K562 (cell line): ENCODE measurements at regions of chr12 and their contacts with region 1.

Region 1: GRCh38 chr12:116559162-116559935 is at the start of gene MAP1LC3B2:
- DNase-seq: peak; percentile 87 to 98 (median 90)
- ATAC-seq: peak; percentile 91
- H3K4me3 ChIP-seq: peak within 1 kb of the TSS; percentile 27
- H3K27ac ChIP-seq: peak within 1 kb of the TSS; percentile 99
- H3K4me1 ChIP-seq: peaks cover 38 to 47% of the 10 kb centered on the region in 2 experiments
- H3K27me3 ChIP-seq: no peaks in the 10 kb centered on the region
- CTCF ChIP-seq: no peak
- EP300 ChIP-seq: peak; percentile 95
- POLR2A ChIP-seq: peak; percentile 78
- RAD21 ChIP-seq: peak in 1 of 2 experiments; percentile 29; a peak in 2 of 4 replicates
- polyA plus RNA-seq, gene MAP1LC3B2: 0.55 to 0.63 TPM

Region 2: DNA sequence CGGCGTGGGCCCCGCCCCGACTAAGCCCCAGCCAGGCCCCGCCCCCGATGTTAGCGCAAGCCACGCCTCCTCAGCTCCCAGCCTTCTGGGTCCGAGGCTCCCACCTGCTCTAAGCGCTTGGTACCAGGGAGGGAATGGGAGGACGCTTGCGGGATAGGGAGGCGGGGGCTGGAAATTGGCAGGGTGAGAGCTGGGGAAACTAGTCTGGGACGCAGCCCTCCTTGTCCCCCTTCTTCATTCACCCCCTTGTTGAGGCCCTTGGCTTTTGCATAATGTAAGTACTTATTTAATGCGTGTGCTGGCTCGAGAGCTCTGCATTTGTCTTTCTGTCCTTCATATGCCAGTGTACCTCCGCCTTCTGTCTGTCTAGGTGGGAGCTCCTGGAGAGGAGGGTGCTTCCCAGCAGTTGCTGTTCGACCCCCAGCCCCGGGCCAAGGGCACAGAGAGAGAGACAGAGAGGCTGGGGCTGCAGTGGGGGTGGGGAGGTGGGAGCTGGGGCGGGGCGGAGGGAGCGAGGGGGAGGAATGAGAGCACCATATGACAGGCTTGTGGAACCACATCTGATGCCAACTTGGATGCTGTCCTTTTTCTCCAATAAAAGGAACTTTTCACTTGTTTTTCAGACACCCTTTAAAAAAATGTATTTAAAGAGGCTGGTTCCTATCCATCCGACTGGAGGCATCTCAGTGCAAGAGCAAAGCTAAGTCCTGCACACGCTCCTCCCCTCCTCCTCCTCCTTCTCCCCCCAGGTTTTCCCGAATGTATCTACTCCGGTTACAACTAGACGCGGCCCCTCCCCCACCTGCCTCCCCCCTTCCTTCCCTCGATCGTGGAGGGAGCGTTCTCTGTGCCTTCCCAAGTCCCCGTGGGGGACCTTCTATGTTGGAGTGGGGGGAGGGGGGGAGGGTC is 25.8 kb before region 1 on chr12:
- CTCF ChIA-PET with region 1: no interaction called
- POLR2A ChIA-PET with region 1: interaction called, 15 read pairs
- in situ Hi-C with region 1: no loop called
- intact Hi-C with region 1: loop called (anchors 1 kb)
- DNase-seq: peak; percentile 89 to 99 (median 98)
- ATAC-seq: peak; percentile 97
- H3K4me3 ChIP-seq: peak overlapping the region; percentile 53
- H3K27ac ChIP-seq: peak overlapping the region; percentile 73
- H3K4me1 ChIP-seq: peaks cover 21 to 22% of the 10 kb centered on the region in 2 experiments
- H3K27me3 ChIP-seq: no peaks in the 10 kb centered on the region
- CTCF ChIP-seq: no peak
- EP300 ChIP-seq: peak; percentile 7; the same call in 1 of the 2 replicates
- POLR2A ChIP-seq: peak; percentile 53
- RAD21 ChIP-seq: peak in 1 of 2 experiments; percentile 12; a peak in 1 of 4 replicates

Region 3: DNA sequence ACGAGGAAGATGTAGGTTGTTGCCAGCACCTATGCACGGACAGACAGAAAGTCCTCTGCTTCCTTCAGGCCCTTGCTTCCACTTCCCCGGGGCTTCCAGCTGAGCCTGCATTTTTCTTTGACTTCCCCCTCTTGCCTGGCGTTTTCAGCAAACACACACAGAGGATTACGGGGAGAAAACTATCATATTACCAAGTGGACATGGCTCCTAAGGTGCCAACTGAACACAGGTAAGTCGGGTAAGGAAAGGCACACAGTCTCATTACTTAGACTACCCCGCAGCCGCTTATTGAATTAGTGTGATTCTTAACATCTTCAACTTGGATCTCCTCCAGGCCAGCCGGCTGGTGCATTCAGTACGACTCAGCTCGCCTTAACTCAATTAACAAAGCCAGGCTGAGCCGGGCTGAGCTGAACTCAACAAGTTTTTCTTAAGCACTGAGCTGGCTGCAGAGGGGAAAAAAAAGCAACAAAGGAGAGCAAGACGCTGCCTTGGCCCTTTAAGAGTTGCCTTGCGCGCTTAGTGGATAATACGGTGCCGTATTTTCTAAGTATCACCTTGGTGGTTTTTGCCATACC is 19.4 kb before region 1 on chr12:
- CTCF ChIA-PET with region 1: no interaction called
- POLR2A ChIA-PET with region 1: interaction called, 40 read pairs
- in situ Hi-C with region 1: no loop called
- intact Hi-C with region 1: no loop called
- DNase-seq: no peak
- ATAC-seq: peak; percentile 48
- H3K4me3 ChIP-seq: no peak overlapping the region
- H3K27ac ChIP-seq: no peak overlapping the region
- H3K4me1 ChIP-seq: peaks cover 8 to 24% of the 10 kb centered on the region in 2 experiments
- H3K27me3 ChIP-seq: no peaks in the 10 kb centered on the region
- CTCF ChIP-seq: no peak
- EP300 ChIP-seq: no peak
- POLR2A ChIP-seq: no peak
- RAD21 ChIP-seq: no peak

Region 4: DNA sequence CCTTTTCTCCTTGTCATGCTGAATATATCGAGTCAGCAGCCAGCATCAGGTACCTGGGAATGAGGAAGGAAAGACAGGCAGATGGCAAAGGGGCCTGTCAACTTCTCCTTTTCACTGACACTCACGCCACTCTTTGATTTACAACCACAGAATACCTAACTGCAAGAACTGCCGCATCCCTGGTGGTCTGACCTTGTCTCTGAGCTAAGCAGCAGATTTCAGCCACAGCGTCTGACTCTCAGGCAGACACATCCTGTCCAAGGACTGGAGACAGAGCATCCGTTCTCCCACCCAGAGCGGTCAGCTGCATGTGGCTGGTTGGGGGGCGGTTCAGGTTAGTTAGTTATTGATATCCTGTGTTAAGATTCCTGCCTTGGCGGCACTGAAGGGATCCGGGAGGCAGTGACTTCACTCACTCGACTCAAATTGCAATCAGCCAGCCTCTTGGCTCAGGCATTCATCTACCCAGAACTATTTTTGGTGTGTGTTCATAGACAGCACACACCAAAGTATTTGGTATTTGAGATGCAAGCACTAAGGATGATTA is 11.3 kb before region 1 on chr12:
- CTCF ChIA-PET with region 1: no interaction called
- POLR2A ChIA-PET with region 1: interaction called, 40 read pairs
- in situ Hi-C with region 1: no loop called
- intact Hi-C with region 1: no loop called
- DNase-seq: peak in 2 of 4 experiments; percentile 30 to 47
- ATAC-seq: peak; percentile 28
- H3K4me3 ChIP-seq: no peak overlapping the region
- H3K27ac ChIP-seq: no peak overlapping the region; the same call in 2 of the 3 replicates
- H3K4me1 ChIP-seq: peaks cover 25 to 41% of the 10 kb centered on the region in 2 experiments
- H3K27me3 ChIP-seq: no peaks in the 10 kb centered on the region
- CTCF ChIP-seq: no peak
- EP300 ChIP-seq: peak; percentile 42; the same call in 1 of the 2 replicates
- POLR2A ChIP-seq: no peak
- RAD21 ChIP-seq: no peak

Region 5: DNA sequence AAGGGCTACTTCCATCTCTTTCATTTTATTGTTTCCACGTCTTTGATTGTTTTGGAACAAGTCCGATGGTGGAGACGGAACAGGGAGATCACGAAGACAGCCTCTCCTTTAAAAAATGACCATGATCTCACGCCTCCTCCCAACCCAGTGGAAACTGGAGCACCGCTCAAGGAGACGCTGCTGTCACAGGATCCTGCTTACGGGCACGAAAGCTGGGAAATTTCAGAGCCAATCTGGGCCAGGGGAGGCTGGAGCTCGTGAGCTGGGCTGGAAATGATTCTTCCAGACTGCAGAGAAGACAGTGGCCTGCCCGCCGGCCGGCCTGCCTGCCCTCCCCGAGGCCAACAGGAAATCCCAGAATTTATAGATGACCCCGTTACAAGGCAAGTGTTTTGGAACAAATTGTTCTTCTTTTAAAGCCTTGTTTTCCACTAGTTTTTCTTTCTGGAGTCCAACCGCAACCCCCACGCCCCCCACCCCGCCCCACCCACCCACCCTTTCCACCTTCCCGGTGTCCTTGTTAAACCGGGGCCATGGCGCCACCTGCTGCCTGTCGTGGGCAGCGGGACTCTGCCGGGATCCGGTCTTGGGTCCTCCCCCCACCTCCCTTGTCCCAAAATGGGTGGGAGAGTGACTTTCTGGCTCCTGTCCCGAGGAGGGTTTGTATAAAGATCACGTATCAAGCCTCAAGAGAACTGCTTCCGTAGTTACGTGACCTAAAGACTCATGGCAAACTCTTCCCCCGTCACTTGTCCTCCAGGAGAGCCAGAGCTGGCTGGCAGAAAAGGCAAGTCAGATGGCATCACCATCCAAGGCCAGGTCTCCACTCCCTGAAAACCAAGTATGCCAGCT is 40.2 kb after region 1 on chr12:
- CTCF ChIA-PET with region 1: no interaction called
- POLR2A ChIA-PET with region 1: interaction called, 3 read pairs
- in situ Hi-C with region 1: no loop called
- intact Hi-C with region 1: loop called (anchors 1 kb)
- DNase-seq: peak; percentile 87 to 90 (median 89)
- ATAC-seq: peak; percentile 90
- H3K4me3 ChIP-seq: no peak overlapping the region
- H3K27ac ChIP-seq: peak overlapping the region; percentile 85
- H3K4me1 ChIP-seq: peaks cover 30 to 39% of the 10 kb centered on the region in 2 experiments
- H3K27me3 ChIP-seq: no peaks in the 10 kb centered on the region
- CTCF ChIP-seq: peak; percentile 65 to 71 (median 66)
- EP300 ChIP-seq: no peak
- POLR2A ChIP-seq: no peak
- RAD21 ChIP-seq: peak in 1 of 2 experiments; percentile 65; a peak in 3 of 4 replicates